Mammary epithelial cell (primary cell): ENCODE measurements at regions of chr2 and their contacts with region 1.

Region 1: GRCh38 chr2:216789081-216789480 is 70.8 kb downstream of the TNP1 start:
- DNase-seq: no peak
- H3K4me3 ChIP-seq: no peak overlapping the region
- H3K27ac ChIP-seq: no peak overlapping the region
- H3K4me1 ChIP-seq: no peaks in the 10 kb centered on the region
- H3K27me3 ChIP-seq: peaks cover 2% of the 10 kb centered on the region
- CTCF ChIP-seq: no peak

Region 2: GRCh38 chr2:216465580-216466197 is 323.4 kb before region 1 on chr2:
- CTCF ChIA-PET with region 1: no interaction called
- dilution Hi-C with region 1: no loop called
- in situ Hi-C with region 1: no loop called
- intact Hi-C with region 1: no loop called
- DNase-seq: no peak
- H3K4me3 ChIP-seq: no peak overlapping the region
- H3K27ac ChIP-seq: no peak overlapping the region
- H3K4me1 ChIP-seq: no peaks in the 10 kb centered on the region
- H3K27me3 ChIP-seq: no peaks in the 10 kb centered on the region
- CTCF ChIP-seq: no peak

Region 3: DNA sequence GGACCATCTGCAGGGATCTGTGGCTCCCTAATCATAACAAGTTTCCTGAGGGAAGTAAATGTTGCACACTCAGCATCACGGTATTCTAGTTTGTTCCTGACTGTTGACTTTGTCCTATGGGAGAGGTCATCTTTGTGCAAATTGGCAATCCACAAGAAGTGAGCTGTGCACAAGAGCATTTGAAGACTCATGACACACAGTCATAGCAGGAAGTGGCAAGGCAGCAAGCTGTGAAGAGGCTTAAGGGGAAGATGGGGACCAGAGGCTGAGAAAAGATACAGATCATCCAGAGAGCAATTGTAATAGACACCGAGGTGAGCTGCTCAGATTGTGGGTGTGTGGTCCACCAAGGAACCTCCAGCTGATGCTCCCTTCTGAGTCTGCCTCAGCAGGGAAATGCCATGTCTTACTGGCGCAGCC is 68.1 kb after region 1 on chr2:
- CTCF ChIA-PET with region 1: no interaction called
- dilution Hi-C with region 1: loop called (anchors 5 kb)
- in situ Hi-C with region 1: no loop called
- intact Hi-C with region 1: no loop called
- DNase-seq: peak; percentile 11
- H3K4me3 ChIP-seq: no peak overlapping the region
- H3K27ac ChIP-seq: no peak overlapping the region
- H3K4me1 ChIP-seq: peaks cover 4% of the 10 kb centered on the region
- H3K27me3 ChIP-seq: no peaks in the 10 kb centered on the region
- CTCF ChIP-seq: no peak